ENCODE measurements at regions of chr20 and their contacts with region 1.

Region 1: DNA sequence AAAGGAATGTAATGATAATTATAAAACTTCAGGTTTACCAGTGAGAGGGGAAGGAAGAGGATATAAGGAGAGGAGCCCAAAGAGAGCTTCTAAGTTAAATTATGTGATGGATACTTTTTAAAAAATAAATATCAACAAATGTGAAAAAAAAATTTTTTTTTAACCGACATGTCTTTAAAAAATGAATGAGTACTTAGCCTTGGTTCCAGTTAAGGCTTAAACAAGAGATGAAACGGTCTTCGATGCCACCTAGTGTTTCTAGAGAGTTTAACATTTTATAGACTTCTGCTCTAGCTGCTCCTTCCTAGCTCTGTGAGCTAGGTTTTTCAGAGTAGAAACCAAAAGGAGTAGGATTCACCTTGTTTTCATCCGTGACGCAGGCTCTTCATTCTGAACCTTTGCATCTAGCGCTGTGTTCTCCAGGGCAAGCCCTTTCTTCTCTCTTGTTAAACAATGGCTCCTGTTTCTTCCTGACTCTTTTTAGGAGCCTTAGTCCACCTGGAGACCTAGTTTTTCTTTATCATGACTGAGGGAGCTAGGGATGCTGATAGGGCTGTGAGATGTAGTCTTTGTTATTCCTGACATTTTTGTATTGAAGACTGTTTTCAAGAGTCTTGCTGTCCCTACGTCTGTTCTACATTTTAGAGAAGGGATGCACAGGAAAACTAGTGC is 42.4 kb upstream of the GNRH2 start:
- DNase-seq: peak; percentile 71
- H3K4me3 Mint-ChIP-seq: no peak overlapping the region
- H3K27ac Mint-ChIP-seq: no peak overlapping the region
- H3K4me1 Mint-ChIP-seq: no peaks in the 10 kb centered on the region
- H3K27me3 Mint-ChIP-seq: no peaks in the 10 kb centered on the region
- CTCF ChIP-seq: peak; percentile 40

Region 2: DNA sequence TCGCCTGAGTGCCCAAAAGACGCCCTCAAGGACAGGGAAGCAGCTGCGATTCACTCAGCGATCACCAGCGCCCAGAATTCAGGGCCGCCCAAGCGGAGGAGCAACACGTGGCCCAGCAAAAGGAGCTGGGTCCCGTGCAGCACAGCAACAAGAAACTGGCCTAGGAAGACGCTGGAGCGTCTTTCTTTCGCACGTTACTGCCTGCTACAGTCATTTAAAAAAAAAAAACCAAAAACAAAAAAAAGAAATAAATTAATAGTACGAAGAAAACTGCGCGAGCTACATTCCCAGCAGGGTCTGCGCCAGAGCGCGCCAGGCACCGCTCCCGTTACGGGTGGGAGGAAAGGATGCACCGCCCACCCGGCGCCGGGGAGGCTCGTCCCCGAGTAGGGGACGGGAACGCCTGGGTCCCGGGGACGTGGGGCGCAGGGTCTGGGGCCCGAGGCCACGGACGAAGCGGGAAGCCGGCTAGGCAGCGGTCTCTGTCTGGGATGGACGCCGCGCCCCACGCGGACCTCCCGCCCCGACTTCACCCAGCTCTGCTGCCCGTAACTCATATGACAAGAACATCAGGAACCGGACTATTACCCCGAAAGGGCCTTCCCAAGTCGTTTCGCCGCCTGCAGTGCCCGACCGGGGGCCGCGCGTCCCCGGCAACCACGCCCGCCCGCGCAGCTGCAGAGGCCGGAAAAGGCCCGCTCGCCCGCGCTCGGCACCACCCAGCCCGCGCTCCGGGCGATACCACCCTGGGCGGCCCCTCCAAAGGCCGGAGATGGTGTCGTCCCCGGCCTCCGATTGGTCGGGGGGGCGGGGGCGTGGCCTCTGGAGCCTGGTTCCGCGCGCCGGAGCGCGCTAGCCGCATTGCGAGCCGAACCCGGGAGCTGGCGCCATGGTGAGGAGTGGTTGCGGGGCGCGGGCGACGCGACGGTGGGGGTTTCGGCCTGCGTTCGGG is 348.9 kb before region 1 on chr20 and contains the start of gene NOP56:
- CTCF ChIA-PET with region 1: no interaction called
- POLR2A ChIA-PET with region 1: interaction called, 11 read pairs
- intact Hi-C with region 1: loop called (anchors 1 kb)
- DNase-seq: peak; percentile 89
- H3K4me3 Mint-ChIP-seq: peak within 1 kb of the TSS; percentile 87
- H3K27ac Mint-ChIP-seq: peak within 1 kb of the TSS; percentile 66
- H3K4me1 Mint-ChIP-seq: peaks cover 23% of the 10 kb centered on the region
- H3K27me3 Mint-ChIP-seq: no peaks in the 10 kb centered on the region
- CTCF ChIP-seq: no peak
- total RNA-seq, gene NOP56: 228 and 340 TPM in 2 replicates

Region 3: GRCh38 chr20:2752567-2753460 is 248.2 kb before region 1 on chr20:
- CTCF ChIA-PET with region 1: no interaction called
- POLR2A ChIA-PET with region 1: interaction called, 3 read pairs
- intact Hi-C with region 1: loop called (anchors 1 kb)
- DNase-seq: peak; percentile 44
- H3K4me3 Mint-ChIP-seq: peak overlapping the region; percentile 59
- H3K27ac Mint-ChIP-seq: no peak overlapping the region
- H3K4me1 Mint-ChIP-seq: peaks cover 10% of the 10 kb centered on the region
- H3K27me3 Mint-ChIP-seq: peaks cover 58% of the 10 kb centered on the region
- CTCF ChIP-seq: peak; percentile 62

Region 4: GRCh38 chr20:2873010-2873746 is 127.8 kb before region 1 on chr20 and contains the start of gene PTPRA:
- CTCF ChIA-PET with region 1: interaction called, 6 read pairs
- POLR2A ChIA-PET with region 1: interaction called, 5 read pairs
- intact Hi-C with region 1: loop called (anchors 1 kb)
- DNase-seq: peak; percentile 89
- H3K4me3 Mint-ChIP-seq: peak within 1 kb of the TSS; percentile 91
- H3K27ac Mint-ChIP-seq: peak within 1 kb of the TSS; percentile 23
- H3K4me1 Mint-ChIP-seq: peaks cover 37% of the 10 kb centered on the region
- H3K27me3 Mint-ChIP-seq: no peaks in the 10 kb centered on the region
- CTCF ChIP-seq: no peak
- total RNA-seq, gene PTPRA: 29.3 TPM in 2 replicates

Region 5: DNA sequence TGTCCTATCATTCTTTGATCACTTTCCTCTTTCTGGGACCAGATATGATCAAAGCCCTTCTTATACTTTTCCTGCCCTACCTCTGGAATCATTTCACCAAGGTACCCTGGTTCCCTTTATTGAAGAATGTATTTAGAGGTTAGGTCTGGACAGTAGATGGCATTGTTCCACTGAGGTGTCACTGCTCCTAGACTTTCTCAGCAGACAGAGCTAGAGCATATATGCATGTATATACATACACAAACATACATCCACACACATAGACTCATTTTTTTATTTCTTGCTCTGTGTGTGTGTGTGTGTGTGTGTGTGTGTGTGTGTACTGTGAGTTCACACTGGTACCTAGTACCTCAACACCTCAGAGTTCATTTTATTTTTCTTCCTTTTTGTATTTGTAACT is 86.8 kb before region 1 on chr20:
- CTCF ChIA-PET with region 1: interaction called, 7 read pairs
- POLR2A ChIA-PET with region 1: no interaction called
- intact Hi-C with region 1: loop called (anchors 1 kb)
- DNase-seq: peak; percentile 31
- H3K4me3 Mint-ChIP-seq: no peak overlapping the region
- H3K27ac Mint-ChIP-seq: no peak overlapping the region
- H3K4me1 Mint-ChIP-seq: no peaks in the 10 kb centered on the region
- H3K27me3 Mint-ChIP-seq: no peaks in the 10 kb centered on the region
- CTCF ChIP-seq: no peak

Region 6: DNA sequence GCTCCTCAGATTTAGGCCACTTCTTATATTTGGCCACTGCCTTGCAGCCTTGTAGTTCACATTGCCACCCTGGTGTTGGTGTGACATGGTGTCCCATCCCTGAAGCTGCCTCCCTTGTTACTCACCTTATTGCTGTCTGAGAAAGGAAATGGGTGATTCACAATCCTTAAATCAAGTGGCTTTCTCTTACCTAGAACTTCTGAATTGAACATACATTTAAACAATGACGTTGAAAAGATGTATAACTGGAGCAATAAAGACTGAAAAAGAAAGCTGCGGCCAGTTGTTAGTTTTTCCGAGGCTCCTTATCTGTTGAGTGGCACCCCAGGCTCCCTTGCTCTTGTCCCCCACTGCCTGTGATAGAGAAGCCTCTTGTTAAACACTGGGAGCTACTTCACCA is 13.7 kb after region 1 on chr20:
- CTCF ChIA-PET with region 1: interaction called, 12 read pairs
- POLR2A ChIA-PET with region 1: interaction called, 4 read pairs
- intact Hi-C with region 1: no loop called
- DNase-seq: peak; percentile 0
- H3K4me3 Mint-ChIP-seq: no peak overlapping the region
- H3K27ac Mint-ChIP-seq: no peak overlapping the region
- H3K4me1 Mint-ChIP-seq: peaks cover 9% of the 10 kb centered on the region
- H3K27me3 Mint-ChIP-seq: no peaks in the 10 kb centered on the region
- CTCF ChIP-seq: no peak

Region 7: DNA sequence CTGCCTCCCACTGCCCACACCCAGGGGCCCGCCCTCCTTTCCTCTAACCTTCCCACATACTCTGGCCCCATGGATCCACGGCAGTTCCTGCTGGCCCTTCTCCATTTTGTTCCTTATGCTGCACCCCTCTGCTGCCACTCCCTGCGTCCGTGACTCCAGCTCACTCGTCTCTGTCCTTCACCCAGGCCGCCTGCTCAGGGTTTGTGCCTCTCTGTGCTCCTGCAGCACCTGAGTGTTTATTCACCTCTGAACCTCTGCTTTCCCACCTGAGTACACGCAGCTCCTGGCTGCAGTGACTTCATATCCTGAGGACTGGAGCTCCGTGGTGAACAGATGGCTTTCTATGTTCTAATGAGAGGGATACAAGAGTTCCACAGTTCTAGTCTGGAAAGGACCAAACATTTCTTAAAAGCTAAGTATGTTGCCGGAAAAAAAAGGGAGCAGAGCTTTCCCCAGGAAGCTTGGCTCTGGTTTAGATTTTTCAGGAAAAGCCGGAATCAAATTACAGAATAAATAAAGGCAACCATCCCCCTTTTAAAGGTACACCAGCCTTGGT is 40.9 kb after region 1 on chr20:
- CTCF ChIA-PET with region 1: no interaction called
- POLR2A ChIA-PET with region 1: no interaction called
- intact Hi-C with region 1: no loop called
- DNase-seq: no peak
- H3K4me3 Mint-ChIP-seq: no peak overlapping the region
- H3K27ac Mint-ChIP-seq: no peak overlapping the region
- H3K4me1 Mint-ChIP-seq: peaks cover 10% of the 10 kb centered on the region
- H3K27me3 Mint-ChIP-seq: no peaks in the 10 kb centered on the region
- CTCF ChIP-seq: no peak